ENCODE measurements at regions of chr9 and their contacts with region 1.

Region 1: GRCh38 chr9:128034821-128035764 is 32.0 kb downstream of the NAIF1 start:
- DNase-seq: peak; percentile 82
- CTCF ChIP-seq: peak; percentile 77

Region 2: DNA sequence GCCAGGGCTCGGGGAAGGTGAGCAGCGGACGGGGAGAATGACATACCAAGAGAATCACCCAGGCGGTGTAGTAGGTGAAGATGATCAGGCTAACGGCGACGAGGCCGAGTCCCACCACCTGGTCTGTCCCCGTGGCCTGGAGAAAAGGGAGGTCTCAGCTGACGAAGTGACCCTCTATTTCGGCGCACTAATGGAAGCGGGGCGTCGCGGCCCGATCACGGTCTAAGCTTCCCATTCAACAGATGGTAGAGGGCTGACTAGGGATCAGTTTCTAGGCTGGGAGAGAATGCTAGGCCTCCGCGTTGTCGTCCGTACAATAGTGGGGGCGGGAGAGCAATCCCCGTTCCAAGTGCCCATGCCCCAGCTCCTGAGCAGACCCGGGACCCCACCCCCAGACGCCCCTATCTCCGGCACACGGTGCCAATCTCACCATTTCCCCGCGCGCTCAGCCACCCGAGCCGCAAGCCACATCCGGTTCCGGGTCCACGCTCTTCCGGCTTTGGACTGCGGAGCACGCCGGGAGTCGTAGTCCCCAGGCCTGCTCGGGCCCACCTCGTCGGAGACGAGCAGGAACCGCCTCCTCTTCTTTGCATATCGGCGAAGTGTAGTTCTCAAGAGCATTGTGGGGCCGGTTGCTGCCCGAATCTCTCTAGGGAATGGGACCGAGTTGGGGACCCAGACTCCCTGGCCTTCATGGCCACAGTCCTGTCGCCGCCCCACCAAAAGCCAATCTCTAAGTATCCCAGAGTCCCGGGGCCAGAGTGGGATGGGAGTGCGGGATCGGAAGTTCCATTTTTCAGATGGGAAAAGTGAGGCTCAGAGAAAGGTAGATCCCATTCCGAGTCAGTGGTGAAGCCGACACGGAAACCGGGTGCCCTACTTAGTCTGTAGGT is 97.5 kb before region 1 on chr9 and contains the start of gene DPM2:
- CTCF ChIA-PET with region 1: interaction called, 615 read pairs
- POLR2A ChIA-PET with region 1: no interaction called
- DNase-seq: peak; percentile 95
- CTCF ChIP-seq: no peak

Region 3: GRCh38 chr9:127980706-127981558 is 54.2 kb before region 1 on chr9 and contains the start of gene EEIG1:
- CTCF ChIA-PET with region 1: interaction called, 22 read pairs
- POLR2A ChIA-PET with region 1: no interaction called
- DNase-seq: peak; percentile 97
- CTCF ChIP-seq: no peak

Region 4: DNA sequence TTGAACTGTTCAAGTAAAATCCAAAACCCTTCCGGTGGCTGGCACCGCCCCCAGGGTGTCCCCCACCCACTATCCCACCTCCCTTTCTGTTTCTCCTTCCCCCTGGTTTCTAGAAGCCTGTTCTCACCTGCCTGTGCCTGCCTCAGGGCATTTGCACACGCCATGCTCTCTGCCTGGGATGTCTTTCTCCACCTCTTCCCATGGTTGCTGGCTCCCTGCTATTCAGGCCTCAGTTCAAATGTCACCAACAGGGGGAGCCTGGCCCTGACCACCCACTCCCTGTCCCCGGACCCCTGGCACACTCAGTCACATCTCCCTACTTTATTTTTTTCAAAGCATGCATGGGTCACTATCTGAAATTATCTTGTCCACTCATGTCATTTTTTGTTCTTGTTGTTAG is 14.4 kb before region 1 on chr9:
- CTCF ChIA-PET with region 1: interaction called, 47 read pairs
- POLR2A ChIA-PET with region 1: interaction called, 6 read pairs
- DNase-seq: peak; percentile 9
- CTCF ChIP-seq: no peak

Region 5: DNA sequence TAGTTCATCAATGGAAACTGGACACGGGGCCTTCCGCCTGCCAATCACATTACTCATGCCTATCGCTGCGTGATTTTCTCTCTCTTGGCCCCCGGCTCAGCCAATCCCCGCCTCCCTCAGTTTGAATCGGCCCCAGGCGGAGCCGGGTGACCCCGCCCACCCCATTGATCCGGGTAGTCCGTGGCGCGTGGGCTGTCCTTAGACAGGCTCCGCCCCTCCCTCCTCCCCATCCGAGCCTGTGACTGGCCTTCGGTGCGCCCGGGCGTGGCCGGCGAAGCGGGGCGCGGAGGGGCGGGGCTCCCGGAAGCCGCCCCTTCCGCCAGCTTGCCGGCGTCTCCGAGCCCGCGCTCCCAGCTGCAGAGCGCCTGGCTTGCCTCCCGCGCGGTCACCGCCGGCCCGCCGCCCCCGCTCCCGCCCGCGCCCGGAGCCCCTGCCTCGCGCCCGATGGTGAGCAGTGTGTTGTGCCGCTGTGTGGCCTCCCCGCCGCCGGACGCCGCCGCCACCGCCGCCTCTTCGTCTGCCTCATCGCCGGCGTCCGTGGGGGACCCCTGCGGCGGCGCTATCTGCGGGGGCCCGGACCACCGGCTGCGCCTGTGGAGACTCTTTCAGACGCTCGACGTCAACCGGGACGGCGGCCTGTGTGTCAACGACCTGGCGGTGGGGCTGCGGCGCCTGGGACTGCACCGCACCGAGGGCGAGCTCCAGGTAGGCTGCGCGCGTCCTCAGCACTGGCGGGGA is 33.0 kb after region 1 on chr9 and contains the start of gene SLC25A25:
- CTCF ChIA-PET with region 1: interaction called, 13 read pairs
- POLR2A ChIA-PET with region 1: no interaction called
- DNase-seq: peak; percentile 98
- CTCF ChIP-seq: no peak

Region 6: DNA sequence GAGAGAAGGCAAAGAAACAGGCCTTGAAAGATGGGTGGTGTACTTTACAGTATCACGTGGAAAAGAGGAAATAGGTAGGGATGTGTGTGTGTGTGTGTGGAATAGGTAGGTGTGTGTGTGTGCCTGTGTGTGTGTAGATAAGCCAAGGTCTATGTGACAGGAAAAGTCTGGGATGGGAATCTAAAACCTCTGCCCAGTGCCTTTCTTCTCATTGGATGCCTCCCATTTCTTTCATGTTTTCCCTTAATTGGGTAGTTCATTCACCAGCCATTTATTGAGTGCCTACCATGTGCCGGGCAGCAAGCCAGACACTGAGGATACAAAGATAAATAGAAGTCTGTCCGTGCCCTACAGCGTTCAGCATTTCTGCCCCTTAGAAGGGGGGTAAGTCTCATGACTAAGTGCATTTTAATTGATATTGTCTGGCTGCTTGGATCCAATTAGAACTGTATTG is 337.1 kb after region 1 on chr9:
- CTCF ChIA-PET with region 1: no interaction called
- POLR2A ChIA-PET with region 1: no interaction called
- DNase-seq: no peak
- CTCF ChIP-seq: no peak

Region 7: DNA sequence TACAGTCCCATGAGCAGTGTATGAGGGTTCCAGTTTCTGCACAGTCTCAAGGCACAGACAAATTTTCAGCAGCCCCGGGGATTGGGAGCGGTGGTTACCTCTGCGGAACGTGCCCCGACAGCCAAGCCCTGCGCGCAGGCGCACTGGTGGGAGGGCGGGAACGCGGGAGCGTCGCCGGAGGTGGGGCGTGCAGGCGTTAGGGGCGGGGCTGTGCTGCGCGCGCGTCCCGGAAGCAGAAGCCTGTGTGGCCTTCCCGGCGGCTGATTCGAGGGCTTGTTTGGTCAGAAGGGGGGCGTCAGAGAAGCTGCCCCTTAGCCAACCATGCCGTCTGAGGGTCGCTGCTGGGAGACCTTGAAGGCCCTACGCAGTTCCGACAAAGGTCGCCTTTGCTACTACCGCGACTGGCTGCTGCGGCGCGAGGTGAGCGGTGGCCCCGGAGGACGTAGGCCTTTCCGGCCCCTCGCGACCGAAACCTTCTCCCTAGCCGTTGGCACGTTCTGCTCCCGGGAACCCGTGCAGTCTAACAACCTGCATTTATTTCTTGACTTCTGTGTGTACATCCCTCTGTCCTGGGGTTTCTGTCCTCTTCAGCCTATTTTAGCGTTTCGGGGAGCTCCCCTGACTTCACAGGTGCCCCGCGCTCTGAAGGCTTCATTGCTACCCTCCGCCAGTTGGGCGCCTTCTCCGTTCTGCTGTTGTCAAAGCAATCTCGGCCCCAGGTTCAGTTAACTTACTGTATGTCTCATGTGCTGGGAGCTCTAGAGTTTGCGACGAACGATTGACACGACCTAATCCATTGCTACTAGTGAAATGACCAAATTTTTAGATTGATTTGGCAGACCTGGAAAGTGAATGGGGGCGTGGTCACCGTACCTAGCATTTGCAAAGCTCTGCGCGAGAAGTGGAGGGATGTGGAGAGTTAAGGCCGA is 469.7 kb after region 1 on chr9 and contains the start of gene GLE1:
- CTCF ChIA-PET with region 1: no interaction called
- POLR2A ChIA-PET with region 1: no interaction called
- DNase-seq: peak; percentile 100
- CTCF ChIP-seq: no peak

Measured in GM10248 (cell line).